ENCODE measurements at regions of chr3 and their contacts with region 1.

Region 1: GRCh38 chr3:158167737-158168471 is 58.0 kb downstream of the RSRC1 start:
- DNase-seq: peak; percentile 90
- ATAC-seq: peak; percentile 94
- H3K4me3 ChIP-seq: no peak overlapping the region
- H3K27ac ChIP-seq: peak overlapping the region; percentile 49
- H3K4me1 ChIP-seq: peaks cover 26% of the 10 kb centered on the region
- H3K27me3 ChIP-seq: no peaks in the 10 kb centered on the region
- CTCF ChIP-seq: no peak

Region 2: DNA sequence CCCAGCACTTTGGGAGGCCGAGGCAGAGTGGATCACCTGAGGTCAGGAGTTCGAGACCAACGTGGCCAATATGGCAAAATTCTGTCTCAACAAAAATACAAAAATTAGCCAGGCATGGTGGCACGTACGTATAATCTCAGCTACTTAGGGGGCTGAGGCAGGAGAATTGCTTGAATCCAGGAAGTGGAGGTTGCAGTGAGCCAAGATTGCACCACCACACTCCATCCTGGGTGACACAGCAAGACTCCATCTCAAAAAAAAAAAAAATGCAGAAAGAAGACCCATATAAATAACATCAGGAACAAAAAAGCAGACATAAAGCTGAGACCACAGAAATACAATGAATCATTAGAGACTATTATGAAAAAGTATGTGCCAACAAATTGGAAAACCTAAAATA is 429.5 kb before region 1 on chr3:
- CTCF ChIA-PET with region 1: no interaction called
- POLR2A ChIA-PET with region 1: no interaction called
- intact Hi-C with region 1: no loop called
- DNase-seq: no peak
- ATAC-seq: no peak
- H3K4me3 ChIP-seq: no peak overlapping the region
- H3K27ac ChIP-seq: no peak overlapping the region
- H3K4me1 ChIP-seq: no peaks in the 10 kb centered on the region
- H3K27me3 ChIP-seq: no peaks in the 10 kb centered on the region
- CTCF ChIP-seq: no peak

Region 3: GRCh38 chr3:158072790-158073189 is 95.1 kb before region 1 on chr3:
- CTCF ChIA-PET with region 1: no interaction called
- POLR2A ChIA-PET with region 1: no interaction called
- intact Hi-C with region 1: no loop called
- DNase-seq: no peak
- ATAC-seq: no peak
- H3K4me3 ChIP-seq: no peak overlapping the region
- H3K27ac ChIP-seq: no peak overlapping the region
- H3K4me1 ChIP-seq: no peaks in the 10 kb centered on the region
- H3K27me3 ChIP-seq: no peaks in the 10 kb centered on the region
- CTCF ChIP-seq: no peak

Region 4: GRCh38 chr3:158152186-158152585 is 15.7 kb before region 1 on chr3:
- CTCF ChIA-PET with region 1: no interaction called
- POLR2A ChIA-PET with region 1: no interaction called
- intact Hi-C with region 1: no loop called
- DNase-seq: peak; percentile 37
- ATAC-seq: peak; percentile 64; the same call in 1 of the 2 replicates
- H3K4me3 ChIP-seq: no peak overlapping the region
- H3K27ac ChIP-seq: no peak overlapping the region
- H3K4me1 ChIP-seq: no peaks in the 10 kb centered on the region; the same call in 1 of the 2 replicates
- H3K27me3 ChIP-seq: no peaks in the 10 kb centered on the region
- CTCF ChIP-seq: no peak

Region 5: DNA sequence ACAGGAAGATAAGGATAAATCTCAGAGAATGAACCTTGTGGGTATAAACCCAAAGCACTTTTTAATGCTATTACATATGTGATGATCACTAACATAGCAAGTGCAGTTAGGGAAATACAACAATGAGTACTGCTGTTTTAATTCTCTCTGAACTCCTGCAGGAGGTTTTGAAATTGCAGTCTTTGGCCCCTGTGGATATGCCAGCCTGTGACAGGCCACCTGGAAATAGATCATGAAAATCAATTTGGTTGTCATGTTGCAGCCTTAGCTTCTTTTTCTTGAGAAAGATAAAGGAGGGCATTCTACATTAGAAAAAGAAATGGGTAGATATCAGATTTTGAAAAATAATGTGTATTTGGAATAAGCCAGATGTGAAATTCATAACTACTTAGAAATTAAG is 45.6 kb after region 1 on chr3:
- CTCF ChIA-PET with region 1: no interaction called
- POLR2A ChIA-PET with region 1: no interaction called
- intact Hi-C with region 1: loop called (anchors 5 kb)
- DNase-seq: no peak
- ATAC-seq: no peak
- H3K4me3 ChIP-seq: no peak overlapping the region
- H3K27ac ChIP-seq: no peak overlapping the region
- H3K4me1 ChIP-seq: peaks cover 8% of the 10 kb centered on the region; the same call in 1 of the 2 replicates
- H3K27me3 ChIP-seq: no peaks in the 10 kb centered on the region
- CTCF ChIP-seq: no peak

Measured in PC-3 (cell line).